ENCODE measurements at regions of chr1 and their contacts with region 1.

Region 1: GRCh38 chr1:98053471-98054366 is 132.9 kb upstream of the DPYD start:
- DNase-seq: peak; percentile 23 to 90 (median 54)
- ATAC-seq: peak; percentile 96 to 98 (median 98)
- H3K4me3 ChIP-seq: peak overlapping the region; percentile 13 to 48 (median 32)
- H3K27ac ChIP-seq: no peak overlapping the region
- H3K4me1 ChIP-seq: peaks cover 0 to 8% (median 0%) of the 10 kb centered on the region in 3 donors
- H3K27me3 ChIP-seq: peaks cover 0 to 48% (median 11%) of the 10 kb centered on the region in 4 donors
- CTCF ChIP-seq: peak; percentile 84 to 99 (median 90)

Region 2: DNA sequence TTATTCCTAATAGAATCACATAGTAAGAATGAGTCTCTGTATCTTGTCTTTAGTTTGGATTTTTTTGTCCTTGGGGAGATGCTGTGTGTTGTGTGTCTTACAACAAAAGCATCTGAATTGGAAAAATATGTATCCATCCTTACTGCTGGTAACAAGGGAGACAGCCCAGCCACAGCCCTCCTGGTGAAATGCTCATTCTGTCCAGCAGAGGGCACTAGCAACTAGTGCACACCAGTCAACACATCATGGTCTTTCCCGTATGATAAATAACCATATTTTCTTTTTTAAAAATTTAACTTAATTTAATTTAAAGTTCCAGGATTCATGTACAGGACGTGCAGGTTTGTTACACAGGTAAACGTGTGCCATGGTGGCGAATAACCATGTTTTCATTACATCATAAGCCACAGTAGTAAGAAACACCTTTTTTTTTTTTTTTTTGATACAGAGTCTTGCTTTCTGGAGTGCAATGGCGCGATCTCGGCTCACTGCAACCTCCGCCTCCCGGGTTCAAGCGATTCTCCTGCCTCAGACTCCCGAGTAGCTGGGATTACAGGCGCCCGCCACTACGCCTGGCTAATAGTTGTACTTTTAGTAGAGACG is 1087.1 kb before region 1 on chr1:
- intact Hi-C with region 1: loop called (anchors 5 to 10 kb)
- DNase-seq: peak; percentile 43 to 87 (median 68)
- ATAC-seq: peak in 3 of 4 donors; percentile 86 to 94 (median 90)
- H3K4me3 ChIP-seq: no peak overlapping the region
- H3K27ac ChIP-seq: no peak overlapping the region
- H3K4me1 ChIP-seq: no peaks in the 10 kb centered on the region
- H3K27me3 ChIP-seq: no peaks in the 10 kb centered on the region
- CTCF ChIP-seq: peak; percentile 72 to 89 (median 82)

Region 3: GRCh38 chr1:98256700-98257099 is 203.0 kb after region 1 on chr1:
- intact Hi-C with region 1: no loop called
- DNase-seq: no peak
- ATAC-seq: no peak
- H3K4me3 ChIP-seq: no peak overlapping the region
- H3K27ac ChIP-seq: no peak overlapping the region
- H3K4me1 ChIP-seq: no peaks in the 10 kb centered on the region
- H3K27me3 ChIP-seq: no peaks in the 10 kb centered on the region
- CTCF ChIP-seq: no peak